KBM-7 (cell line): ENCODE measurements at regions of chr9 and their contacts with region 1.

Region 1: DNA sequence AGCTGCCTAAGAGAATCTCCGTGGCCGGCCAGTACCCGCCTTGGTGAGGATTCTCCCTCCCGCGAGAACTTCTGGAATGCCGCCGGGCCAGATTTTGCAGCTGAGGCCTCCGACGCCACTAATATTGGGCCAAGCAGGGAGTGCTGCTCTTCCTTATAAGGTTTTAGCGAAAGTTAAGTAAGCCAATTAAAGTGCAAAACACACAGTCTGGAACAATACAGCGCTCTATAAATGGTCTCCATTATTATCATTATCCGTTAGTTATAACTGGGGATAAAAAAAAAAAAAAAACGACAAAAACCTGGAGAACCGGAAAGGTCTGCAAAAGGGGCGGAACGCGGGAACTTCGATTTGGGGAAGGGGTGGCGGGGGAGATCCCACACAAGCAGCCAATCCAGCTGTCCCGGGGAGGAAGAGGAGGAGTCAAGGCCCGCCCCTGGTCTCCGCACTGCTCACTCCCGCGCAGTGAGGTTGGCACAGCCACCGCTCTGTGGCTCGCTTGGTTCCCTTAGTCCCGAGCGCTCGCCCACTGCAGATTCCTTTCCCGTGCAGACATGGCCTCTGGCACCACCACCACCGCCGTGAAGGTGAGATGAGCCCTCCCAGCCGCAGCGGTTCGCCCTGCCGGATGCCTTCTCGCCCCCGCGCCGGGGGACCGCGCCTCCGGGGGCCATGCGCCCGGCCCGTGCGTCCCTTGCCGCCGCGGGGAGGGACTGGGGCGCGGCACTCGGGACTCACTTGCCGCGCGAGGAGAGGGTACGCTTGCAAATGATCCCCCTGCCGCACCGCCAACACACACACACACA is at the start of gene MTAP:
- DNase-seq: peak; percentile 92

Region 2: GRCh38 chr9:22008736-22009562 is 206.6 kb after region 1 on chr9 and contains the start of gene CDKN2B:
- in situ Hi-C with region 1: loop called (anchors 25 kb)
- DNase-seq: peak; percentile 93

Region 3: DNA sequence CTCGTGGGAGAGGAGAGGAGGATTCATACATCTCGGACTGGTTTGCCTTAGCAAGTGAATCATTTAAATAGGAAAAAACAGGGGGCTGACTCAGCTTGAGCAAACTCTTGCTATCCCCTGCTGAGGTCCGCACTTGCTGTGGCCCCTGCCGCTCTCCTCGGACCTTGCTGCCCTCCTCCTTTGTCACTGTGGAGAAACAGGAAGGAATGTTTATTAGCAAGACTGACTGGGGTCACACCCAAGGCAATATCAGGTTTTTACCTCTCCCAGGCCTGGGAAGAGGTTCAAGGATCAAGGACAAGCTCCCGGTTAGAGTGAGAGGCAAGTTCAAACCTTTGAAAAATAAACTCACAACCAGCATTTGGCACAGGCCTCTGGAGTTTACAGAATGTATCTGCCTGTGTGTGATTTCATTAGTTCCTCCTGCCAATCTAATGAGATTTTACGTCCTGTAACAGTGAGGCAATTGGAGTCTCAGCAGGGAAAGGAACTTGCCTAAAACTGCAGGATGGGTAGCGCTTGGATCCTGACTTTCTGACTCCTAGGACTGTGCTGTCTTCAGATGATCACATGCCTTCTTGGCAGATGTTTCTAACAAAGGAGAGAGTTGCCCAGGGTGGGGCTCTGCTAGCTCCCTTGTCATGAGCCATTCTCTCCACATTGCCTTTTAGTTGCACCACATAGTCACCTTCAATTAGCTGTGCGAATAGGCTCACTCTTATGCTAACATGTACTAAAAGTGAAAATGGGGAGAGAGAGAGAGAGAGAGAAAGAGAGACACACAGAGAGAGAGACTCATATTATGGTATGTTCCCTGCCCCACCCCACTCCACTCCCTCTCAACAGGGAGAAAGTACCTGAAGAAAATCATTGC is 315.4 kb after region 1 on chr9:
- in situ Hi-C with region 1: no loop called
- DNase-seq: no peak

Region 4: GRCh38 chr9:22469928-22470544 is 667.6 kb after region 1 on chr9:
- in situ Hi-C with region 1: loop called (anchors 25 kb)
- DNase-seq: peak; percentile 64